Breast epithelium (tissue), 4 donors: ENCODE measurements at regions of chr12 and their contacts with region 1.

Region 1: GRCh38 chr12:19082365-19082911 is 47.1 kb upstream of the PLEKHA5 start:
- DNase-seq: no peak
- H3K4me3 ChIP-seq: no peak overlapping the region
- H3K27ac ChIP-seq: no peak overlapping the region
- H3K4me1 ChIP-seq: no peaks in the 10 kb centered on the region
- H3K27me3 ChIP-seq: no peaks in the 10 kb centered on the region
- CTCF ChIP-seq: no peak
- POLR2A ChIP-seq: no peak

Region 2: DNA sequence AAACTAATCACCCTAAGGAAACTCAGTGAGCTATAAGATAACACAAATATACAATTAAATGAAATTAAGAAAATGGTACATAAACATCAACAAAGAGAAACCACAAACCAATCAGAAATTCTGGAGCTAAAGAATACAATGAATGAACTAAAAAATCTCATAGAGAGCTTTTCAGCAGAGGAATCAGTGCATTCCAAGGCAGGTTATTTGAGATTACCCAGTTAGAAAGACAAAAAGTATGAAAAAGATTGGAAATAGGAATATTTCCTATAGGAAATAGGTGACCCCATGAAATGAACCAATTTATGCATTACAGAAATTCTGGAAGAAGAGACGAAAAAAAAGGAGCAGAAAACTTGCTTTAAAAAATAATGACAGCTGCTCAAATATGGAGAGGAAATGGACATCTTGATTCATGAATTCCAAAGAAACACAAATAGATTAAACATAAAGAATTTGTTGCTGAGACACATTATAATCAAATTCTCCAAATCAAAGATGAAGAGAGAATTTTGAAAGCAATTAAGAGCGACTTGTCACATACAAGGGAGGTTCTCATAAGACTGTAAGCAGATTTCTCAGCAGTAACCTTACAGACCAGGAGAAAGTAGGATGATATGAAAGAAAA is 1083.2 kb before region 1 on chr12:
- intact Hi-C with region 1: loop called (anchors 5 kb)
- DNase-seq: no peak
- H3K4me3 ChIP-seq: no peak overlapping the region
- H3K27ac ChIP-seq: no peak overlapping the region
- H3K4me1 ChIP-seq: no peaks in the 10 kb centered on the region
- H3K27me3 ChIP-seq: no peaks in the 10 kb centered on the region
- CTCF ChIP-seq: no peak
- POLR2A ChIP-seq: no peak

Region 3: DNA sequence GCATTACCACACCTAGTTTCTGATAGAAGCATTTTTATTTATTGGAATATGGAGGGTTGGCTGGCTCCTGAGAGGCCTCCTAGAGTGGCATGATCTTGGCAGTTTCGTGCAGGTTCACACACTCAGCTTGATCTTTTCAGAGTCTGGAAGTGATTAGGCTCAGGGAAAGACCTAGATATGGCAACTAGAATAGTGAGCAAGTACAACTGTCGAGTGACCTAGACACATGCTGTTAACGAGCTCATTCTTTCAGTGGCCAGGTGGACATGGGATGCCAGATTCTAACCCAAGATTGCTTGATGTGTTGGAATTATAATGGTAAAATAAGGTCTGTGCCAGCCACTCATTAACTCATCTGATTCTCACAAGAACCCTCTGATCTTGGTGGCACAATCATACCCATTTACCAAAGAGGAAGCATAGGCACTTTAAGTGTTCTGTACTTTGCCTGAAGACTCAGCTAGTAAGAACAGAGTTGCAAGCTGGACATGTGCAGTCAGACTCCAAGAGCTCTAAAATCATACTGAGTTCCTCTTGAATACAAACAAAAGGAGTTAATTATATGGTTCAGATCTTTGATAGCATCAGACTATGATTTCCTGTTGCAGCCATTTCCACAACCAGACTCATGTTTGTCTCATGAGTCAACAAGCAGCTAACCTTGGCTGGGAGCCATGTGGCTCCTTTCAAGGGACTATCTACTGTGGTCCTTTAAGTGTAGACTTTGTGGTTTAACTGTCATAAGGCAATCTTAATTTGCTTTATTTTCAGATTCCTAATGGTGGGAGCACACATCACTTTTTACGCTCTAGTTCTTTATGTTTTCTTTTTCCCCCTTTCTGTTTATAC is 191.3 kb after region 1 on chr12:
- intact Hi-C with region 1: no loop called
- DNase-seq: peak; percentile 53 to 56
- H3K4me3 ChIP-seq: no peak overlapping the region
- H3K27ac ChIP-seq: peak overlapping the region; percentile 6 to 21
- H3K4me1 ChIP-seq: no peaks in the 10 kb centered on the region
- H3K27me3 ChIP-seq: no peaks in the 10 kb centered on the region
- CTCF ChIP-seq: no peak
- POLR2A ChIP-seq: no peak